Spleen (tissue), 13 donors: ENCODE measurements at regions of chr1 and their contacts with region 1.

Region 1: GRCh38 chr1:160006312-160006940 is 25.4 kb downstream of the PIGM start:
- DNase-seq: peak; percentile 89
- H3K4me3 ChIP-seq: no peak overlapping the region
- H3K27ac ChIP-seq: no peak overlapping the region
- H3K4me1 ChIP-seq: peaks cover 0 to 6% (median 0%) of the 10 kb centered on the region in 6 donors
- H3K27me3 ChIP-seq: peaks cover 0 to 4% (median 0%) of the 10 kb centered on the region in 7 donors
- CTCF ChIP-seq: peak; percentile 53 to 83 (median 74)
- POLR2A ChIP-seq: no peak

Region 2: DNA sequence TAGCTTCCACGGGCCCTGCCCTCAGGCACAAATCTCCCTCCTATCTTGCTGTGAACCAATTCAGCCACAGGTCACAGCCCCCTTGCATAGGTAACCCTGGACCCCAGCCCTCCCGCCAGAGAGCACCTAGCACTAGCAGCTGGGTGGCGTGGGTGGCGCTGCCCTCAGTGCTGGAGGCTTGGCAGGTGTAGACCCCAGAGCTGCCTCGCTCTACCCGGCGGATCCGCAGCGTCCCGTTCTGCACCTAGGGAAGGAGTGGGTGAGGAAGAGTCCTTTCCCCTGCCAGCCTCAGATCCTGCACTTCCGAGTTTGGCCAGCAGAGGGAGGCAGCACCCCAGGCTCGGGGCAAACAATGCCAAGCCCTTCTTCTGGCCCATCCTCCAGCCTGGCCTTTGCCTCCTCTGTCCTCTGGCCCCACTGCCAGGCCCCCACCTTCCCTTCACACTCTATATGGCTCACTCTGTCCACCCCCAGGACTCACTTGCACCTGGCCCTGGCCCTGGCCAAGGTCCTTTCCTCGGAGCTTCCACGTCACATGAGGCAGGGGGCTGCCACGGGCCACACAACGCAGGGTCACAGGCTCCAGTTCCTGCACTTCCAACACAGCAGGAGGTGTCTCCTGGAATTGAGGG is 70.0 kb before region 1 on chr1:
- intact Hi-C with region 1: loop called (anchors 5 kb)
- DNase-seq: peak; percentile 94
- H3K4me3 ChIP-seq: no peak overlapping the region
- H3K27ac ChIP-seq: no peak overlapping the region
- H3K4me1 ChIP-seq: peaks cover 15 to 45% (median 29%) of the 10 kb centered on the region in 6 donors
- H3K27me3 ChIP-seq: peaks cover 0 to 12% (median 0%) of the 10 kb centered on the region in 7 donors
- CTCF ChIP-seq: peak; percentile 95 to 99 (median 98)
- POLR2A ChIP-seq: peak in 1 of 3 donors; percentile 12